Activated naive CD4-positive, alpha-beta T cell treated with anti-CD3 and anti-CD28 coated beads for 36 hours (primary cell): ENCODE measurements at regions of chr15 and their contacts with region 1.

Region 1: GRCh38 chr15:51776952-51777574 is 25.7 kb downstream of the TMOD2 start:
- DNase-seq: peak; percentile 77
- H3K4me3 Mint-ChIP-seq: no peak overlapping the region
- H3K27ac Mint-ChIP-seq: no peak overlapping the region
- H3K4me1 Mint-ChIP-seq: no peaks in the 10 kb centered on the region
- H3K27me3 Mint-ChIP-seq: no peaks in the 10 kb centered on the region

Region 2: GRCh38 chr15:51281368-51281967 is 495.6 kb before region 1 on chr15:
- CTCF ChIA-PET with region 1: no interaction called
- intact Hi-C with region 1: loop called (anchors 2 kb)
- DNase-seq: peak; percentile 48
- H3K4me3 Mint-ChIP-seq: no peak overlapping the region
- H3K27ac Mint-ChIP-seq: no peak overlapping the region
- H3K4me1 Mint-ChIP-seq: no peaks in the 10 kb centered on the region
- H3K27me3 Mint-ChIP-seq: peaks cover 14% of the 10 kb centered on the region

Region 3: DNA sequence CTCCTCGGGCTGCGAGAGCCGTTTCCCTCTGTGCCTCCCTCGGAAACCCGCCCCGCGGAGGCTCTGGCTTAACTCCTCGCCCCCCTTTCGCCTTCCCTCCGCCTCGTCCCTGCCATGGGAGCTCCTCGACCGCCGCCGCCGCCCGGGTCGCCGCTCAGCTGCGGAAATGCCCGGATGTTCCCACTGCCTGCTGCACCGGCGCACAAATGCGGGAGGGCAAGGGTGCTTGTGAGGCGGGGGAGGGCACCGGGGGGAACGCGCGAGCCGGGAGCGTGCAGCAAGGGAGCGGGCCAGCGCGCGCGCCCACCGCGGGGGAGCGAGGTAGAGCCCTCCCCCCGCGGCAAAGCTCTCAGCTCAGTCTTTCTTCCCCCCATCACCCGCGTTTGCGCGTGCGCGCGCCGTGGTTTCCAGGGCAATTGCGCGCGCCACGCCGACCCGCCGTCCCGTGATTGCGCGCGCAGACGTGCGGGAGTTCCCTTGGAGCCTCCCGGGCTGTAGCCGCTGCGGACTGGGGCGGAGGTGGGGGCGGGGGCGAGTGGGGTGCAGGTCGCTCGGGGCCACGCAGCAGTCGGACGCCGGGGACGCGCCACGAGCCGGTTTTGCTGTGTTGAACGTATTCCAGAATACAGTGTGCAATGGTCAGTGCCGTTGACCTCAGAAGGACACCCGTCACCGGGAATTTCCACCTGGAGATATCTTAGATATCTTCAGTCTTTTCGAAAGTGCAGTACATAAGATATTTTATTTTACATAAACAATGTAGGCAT is 154.3 kb before region 1 on chr15 and contains the start of gene DMXL2:
- CTCF ChIA-PET with region 1: interaction called, 25 read pairs
- intact Hi-C with region 1: no loop called
- DNase-seq: peak; percentile 76
- H3K4me3 Mint-ChIP-seq: peak within 1 kb of the TSS; percentile 76
- H3K27ac Mint-ChIP-seq: peak within 1 kb of the TSS; percentile 6
- H3K4me1 Mint-ChIP-seq: peaks cover 19% of the 10 kb centered on the region
- H3K27me3 Mint-ChIP-seq: no peaks in the 10 kb centered on the region
- total RNA-seq, gene DMXL2: 10.0 TPM

Region 4: DNA sequence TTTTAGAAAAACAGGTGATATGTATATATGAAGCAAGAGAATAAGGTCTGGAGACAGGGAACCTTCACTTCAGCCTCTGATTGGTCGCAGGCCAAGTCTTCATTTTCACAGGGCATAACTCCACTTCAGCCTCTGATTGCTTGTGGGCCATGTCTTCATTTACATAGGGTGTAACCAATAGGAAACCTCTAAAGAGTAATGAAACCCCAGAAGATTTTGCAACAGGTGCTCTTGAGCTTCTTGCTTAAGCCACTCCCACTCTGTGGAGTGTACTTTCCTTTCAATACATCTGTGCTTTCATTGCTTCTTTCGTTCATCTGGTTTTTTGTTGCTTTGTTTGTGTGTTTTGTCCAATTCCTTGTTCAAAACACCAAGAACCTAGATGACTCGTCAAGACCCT is 118.4 kb before region 1 on chr15:
- CTCF ChIA-PET with region 1: interaction called, 24 read pairs
- intact Hi-C with region 1: no loop called
- DNase-seq: no peak
- H3K4me3 Mint-ChIP-seq: no peak overlapping the region
- H3K27ac Mint-ChIP-seq: no peak overlapping the region
- H3K4me1 Mint-ChIP-seq: no peaks in the 10 kb centered on the region
- H3K27me3 Mint-ChIP-seq: no peaks in the 10 kb centered on the region

Region 5: DNA sequence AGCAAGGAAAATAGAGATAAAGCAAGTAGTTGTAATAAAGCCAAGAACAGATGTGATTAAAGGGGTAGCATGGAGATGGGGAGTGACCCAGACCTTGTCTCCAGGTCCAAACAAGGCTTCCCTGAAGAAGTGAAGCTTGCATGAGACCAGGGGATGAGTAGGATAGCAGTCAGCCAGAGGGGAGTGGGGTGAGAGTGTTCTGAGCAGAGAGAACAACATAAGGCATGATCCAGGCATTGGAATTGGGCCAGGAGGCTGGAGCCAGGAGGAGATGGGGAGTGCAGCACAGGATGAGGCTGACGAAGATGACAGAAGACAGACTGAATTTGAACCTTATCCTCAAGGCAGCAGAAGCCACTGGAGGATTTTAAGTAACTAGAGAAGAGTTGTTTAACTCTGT is 18.4 kb before region 1 on chr15:
- CTCF ChIA-PET with region 1: interaction called, 23 read pairs
- intact Hi-C with region 1: no loop called
- DNase-seq: no peak
- H3K4me3 Mint-ChIP-seq: no peak overlapping the region
- H3K27ac Mint-ChIP-seq: no peak overlapping the region
- H3K4me1 Mint-ChIP-seq: peaks cover 14% of the 10 kb centered on the region
- H3K27me3 Mint-ChIP-seq: no peaks in the 10 kb centered on the region